OCI-LY7 (cell line): ENCODE measurements at regions of chr19 and their contacts with region 1.

Region 1: GRCh38 chr19:50777754-50778303 is 7.6 kb downstream of the GPR32 start:
- DNase-seq: no peak
- H3K4me3 ChIP-seq: no peak overlapping the region
- H3K27ac ChIP-seq: no peak overlapping the region
- H3K4me1 ChIP-seq: no peaks in the 10 kb centered on the region
- CTCF ChIP-seq: no peak

Region 2: DNA sequence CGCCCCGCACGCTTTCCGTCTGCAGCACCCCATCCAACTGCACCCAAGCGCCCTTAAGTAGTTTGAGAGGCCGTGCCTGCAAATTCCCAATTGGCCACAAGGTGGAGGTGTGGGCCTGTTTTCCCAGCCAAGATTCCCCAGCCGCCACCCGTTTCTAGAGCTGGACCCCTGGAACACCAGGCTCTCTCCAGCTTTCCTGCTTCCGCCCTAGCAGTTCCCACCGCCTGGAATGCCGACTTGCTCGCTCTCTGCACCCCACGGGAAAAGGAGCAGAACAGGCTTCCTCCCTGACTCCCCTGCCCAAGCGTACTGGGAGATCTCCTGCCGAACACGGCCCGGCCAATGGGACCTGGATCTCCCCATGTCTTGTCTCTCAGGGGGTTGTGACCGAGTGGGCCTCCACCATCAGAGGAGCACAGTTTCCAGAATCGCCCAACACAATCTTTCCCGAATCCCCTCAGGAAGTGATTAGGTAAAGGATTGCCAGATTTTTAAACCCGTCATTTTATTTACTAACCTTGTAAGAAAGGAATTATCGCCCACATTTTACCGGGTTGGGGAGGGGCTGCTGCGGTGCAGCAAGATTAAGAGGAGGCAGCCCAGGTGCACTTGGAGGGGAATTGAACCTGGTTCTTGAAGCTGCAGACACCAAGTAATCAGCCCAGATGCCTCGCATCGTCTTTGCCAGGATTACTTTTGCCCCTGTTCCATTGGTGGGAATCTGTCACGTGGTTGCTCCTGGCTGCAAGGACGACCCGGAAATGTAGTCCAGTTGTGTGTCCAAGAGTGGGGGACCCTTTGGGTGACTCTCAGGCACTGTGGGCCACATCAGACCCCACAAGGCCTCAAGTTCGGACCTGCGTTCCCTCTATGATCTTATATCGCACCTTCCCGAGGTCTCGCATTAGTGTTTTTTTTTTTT is 408.9 kb before region 1 on chr19:
- CTCF ChIA-PET with region 1: no interaction called
- POLR2A ChIA-PET with region 1: no interaction called
- intact Hi-C with region 1: loop called (anchors 10 kb)
- DNase-seq: peak; percentile 92
- H3K4me3 ChIP-seq: peak overlapping the region; percentile 81
- H3K27ac ChIP-seq: peak overlapping the region; percentile 74
- H3K4me1 ChIP-seq: peaks cover 55% of the 10 kb centered on the region
- CTCF ChIP-seq: peak; percentile 92

Region 3: DNA sequence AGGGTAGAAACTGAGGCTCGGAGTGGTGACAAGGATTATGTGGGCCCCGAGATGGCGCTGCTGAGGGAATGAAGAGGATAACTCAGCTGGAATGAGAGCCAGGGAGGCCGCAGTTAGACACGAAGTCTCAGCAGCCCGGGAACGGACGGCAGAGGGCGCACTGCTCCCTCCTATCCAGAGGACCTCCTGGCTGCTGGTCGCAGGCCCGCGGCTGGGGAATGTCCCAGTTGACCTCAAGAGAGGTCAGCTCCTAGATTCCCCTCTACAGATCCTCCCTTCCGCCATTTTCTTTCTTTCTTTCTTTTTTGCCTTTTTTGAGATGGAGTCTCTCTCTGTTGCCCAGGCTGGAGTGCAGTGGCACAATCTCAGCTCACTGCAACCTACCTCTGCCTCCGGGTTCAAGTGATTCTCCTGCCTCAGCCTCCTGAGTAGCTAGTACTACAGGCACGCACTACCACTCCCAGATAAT is 240.0 kb before region 1 on chr19:
- CTCF ChIA-PET with region 1: no interaction called
- POLR2A ChIA-PET with region 1: no interaction called
- intact Hi-C with region 1: loop called (anchors 5 kb)
- DNase-seq: peak; percentile 76
- H3K4me3 ChIP-seq: no peak overlapping the region
- H3K27ac ChIP-seq: no peak overlapping the region
- H3K4me1 ChIP-seq: no peaks in the 10 kb centered on the region
- CTCF ChIP-seq: peak; percentile 92

Region 4: GRCh38 chr19:50607874-50608785 is 169.7 kb before region 1 on chr19:
- CTCF ChIA-PET with region 1: no interaction called
- POLR2A ChIA-PET with region 1: no interaction called
- intact Hi-C with region 1: loop called (anchors 5 kb)
- DNase-seq: peak; percentile 74
- H3K4me3 ChIP-seq: no peak overlapping the region
- H3K27ac ChIP-seq: no peak overlapping the region
- H3K4me1 ChIP-seq: no peaks in the 10 kb centered on the region
- CTCF ChIP-seq: peak; percentile 76

Region 5: DNA sequence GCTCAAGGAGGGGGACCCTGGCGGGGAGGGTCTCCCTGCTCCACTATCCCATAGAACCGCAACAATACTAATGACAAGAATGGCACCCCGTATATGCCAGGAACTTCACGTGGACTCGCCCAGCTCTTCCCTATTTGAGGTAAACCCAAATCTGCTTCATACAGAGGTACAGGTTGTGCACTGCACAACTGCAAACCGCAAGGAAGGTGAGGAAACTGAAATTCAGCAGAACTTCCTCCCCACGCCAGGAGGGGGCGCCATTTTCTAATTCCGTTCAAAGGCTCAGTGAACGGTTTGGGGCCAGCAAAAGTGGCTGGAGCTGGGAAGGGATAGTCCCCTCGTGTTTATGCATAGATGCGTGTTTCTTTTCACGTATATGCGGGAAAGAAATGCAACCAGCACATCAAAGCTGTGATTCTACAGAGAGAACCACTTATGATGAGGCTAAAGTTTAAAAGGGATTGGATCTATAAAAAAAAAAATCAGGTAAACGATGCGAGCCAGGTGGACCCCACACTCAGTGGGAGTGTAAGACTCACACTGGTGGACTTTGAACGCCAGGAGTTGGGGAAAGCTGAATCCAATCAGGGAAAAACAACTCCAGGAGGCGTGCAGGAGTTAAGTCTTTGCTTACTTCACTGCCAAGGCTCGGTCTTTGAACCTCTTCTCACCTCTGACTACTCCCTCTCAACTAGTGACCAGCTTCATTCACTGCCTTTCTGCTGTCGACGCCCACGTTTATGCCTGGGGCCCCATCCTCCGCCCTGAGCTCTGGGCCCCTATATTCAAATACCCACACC is 108.3 kb before region 1 on chr19:
- CTCF ChIA-PET with region 1: no interaction called
- POLR2A ChIA-PET with region 1: interaction called, 4 read pairs
- intact Hi-C with region 1: loop called (anchors 1 kb)
- DNase-seq: peak; percentile 47
- H3K4me3 ChIP-seq: no peak overlapping the region
- H3K27ac ChIP-seq: no peak overlapping the region
- H3K4me1 ChIP-seq: no peaks in the 10 kb centered on the region
- CTCF ChIP-seq: peak; percentile 94

Region 6: DNA sequence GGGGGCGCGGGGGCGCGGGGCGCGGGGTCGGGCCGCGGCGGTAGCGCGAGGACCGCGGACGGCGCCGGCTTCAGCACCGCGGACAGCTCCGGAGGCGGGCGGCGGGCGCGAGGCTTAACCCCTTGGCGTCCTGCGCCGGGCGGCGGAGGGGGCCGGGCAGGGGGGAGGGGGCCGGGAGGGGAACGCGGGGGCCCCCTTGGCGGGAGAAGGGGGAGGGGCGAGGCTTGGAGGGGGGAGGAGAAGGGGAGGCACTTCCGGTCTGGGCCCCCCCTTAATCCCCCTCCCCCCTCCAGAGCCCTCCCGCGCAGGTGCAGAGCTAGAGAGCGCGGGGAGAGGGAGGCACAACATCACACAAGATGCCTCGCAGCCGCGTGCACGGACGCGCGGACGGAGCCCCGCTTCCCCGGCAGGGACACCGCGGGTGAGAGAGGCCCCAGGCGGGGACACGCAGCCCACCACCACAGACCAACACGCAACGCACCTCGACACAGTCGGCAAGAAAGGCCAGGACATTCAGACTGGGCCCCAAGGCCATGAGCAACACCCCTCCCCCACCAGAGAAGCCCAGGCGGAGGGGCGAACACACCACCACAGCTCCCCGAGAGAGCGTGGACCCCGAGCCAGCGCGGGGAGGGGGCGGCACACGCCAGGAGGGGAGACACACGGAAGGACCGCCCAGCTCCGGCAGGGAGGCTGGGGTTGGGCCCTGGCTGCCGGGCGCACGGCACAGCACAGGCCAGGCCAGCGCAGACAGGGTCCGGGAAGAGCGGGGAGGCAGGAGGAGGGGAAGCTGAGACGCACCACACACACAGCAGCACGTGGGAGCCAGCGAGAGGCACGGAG is 82.4 kb before region 1 on chr19:
- CTCF ChIA-PET with region 1: no interaction called
- POLR2A ChIA-PET with region 1: no interaction called
- intact Hi-C with region 1: no loop called
- DNase-seq: no peak
- H3K4me3 ChIP-seq: no peak overlapping the region
- H3K27ac ChIP-seq: no peak overlapping the region
- H3K4me1 ChIP-seq: no peaks in the 10 kb centered on the region
- CTCF ChIP-seq: no peak

Region 7: GRCh38 chr19:50705422-50706019 is 72.3 kb before region 1 on chr19:
- CTCF ChIA-PET with region 1: no interaction called
- POLR2A ChIA-PET with region 1: no interaction called
- intact Hi-C with region 1: loop called (anchors 1 kb)
- DNase-seq: peak; percentile 67
- H3K4me3 ChIP-seq: no peak overlapping the region
- H3K27ac ChIP-seq: no peak overlapping the region
- H3K4me1 ChIP-seq: no peaks in the 10 kb centered on the region
- CTCF ChIP-seq: peak; percentile 85

Region 8: DNA sequence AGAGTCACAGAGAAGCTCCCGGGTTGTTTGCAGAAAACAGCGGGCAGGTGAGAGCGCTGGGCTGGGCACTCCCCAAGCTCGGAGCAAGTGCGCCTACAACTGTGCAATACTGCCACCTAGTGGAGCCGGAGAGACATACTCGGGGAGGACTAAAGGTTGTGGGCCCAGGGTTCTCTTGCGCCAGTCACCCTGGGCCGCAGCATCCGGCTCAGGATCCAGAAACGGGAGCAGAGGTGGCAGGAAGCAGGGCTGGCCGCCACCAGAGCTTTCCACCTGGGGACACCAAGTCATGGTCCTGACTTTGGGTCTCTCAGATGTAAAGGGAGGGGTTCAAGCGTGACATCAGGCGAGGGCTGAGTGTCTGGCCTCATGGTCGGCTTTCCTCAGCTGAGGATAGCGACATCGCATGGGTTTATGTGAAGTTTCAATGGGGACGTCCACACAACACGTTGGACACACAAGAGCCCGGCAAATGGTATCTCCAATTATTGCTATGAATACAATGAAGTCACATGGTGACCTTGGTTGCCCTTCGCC is 144.6 kb after region 1 on chr19:
- CTCF ChIA-PET with region 1: no interaction called
- POLR2A ChIA-PET with region 1: no interaction called
- intact Hi-C with region 1: loop called (anchors 5 kb)
- DNase-seq: peak; percentile 85
- H3K4me3 ChIP-seq: no peak overlapping the region
- H3K27ac ChIP-seq: no peak overlapping the region
- H3K4me1 ChIP-seq: no peaks in the 10 kb centered on the region
- CTCF ChIP-seq: peak; percentile 95